Activated CD4-positive, alpha-beta memory T cell treated with anti-CD3 and anti-CD28 coated beads, Interleukin-2, amount 10 ng/mL, durations not matched to agents 7 days and 5 days (primary cell): ENCODE measurements at regions of chr16 and their contacts with region 1.

Region 1: GRCh38 chr16:78778101-78779004 is 678.9 kb downstream of the WWOX start:
- DNase-seq: peak; percentile 84
- H3K4me3 Mint-ChIP-seq: peak overlapping the region; percentile 58
- H3K27ac Mint-ChIP-seq: peak overlapping the region; percentile 98
- H3K4me1 Mint-ChIP-seq: peaks cover 95% of the 10 kb centered on the region
- H3K27me3 Mint-ChIP-seq: no peaks in the 10 kb centered on the region

Region 2: GRCh38 chr16:78742501-78743283 is 35.7 kb before region 1 on chr16:
- CTCF ChIA-PET with region 1: interaction called, 4 read pairs
- POLR2A ChIA-PET with region 1: interaction called, 15 read pairs
- DNase-seq: peak; percentile 90
- H3K4me3 Mint-ChIP-seq: peak overlapping the region; percentile 72
- H3K27ac Mint-ChIP-seq: peak overlapping the region; percentile 96
- H3K4me1 Mint-ChIP-seq: peaks cover 27% of the 10 kb centered on the region
- H3K27me3 Mint-ChIP-seq: no peaks in the 10 kb centered on the region

Region 3: GRCh38 chr16:78789561-78789960 is 11.2 kb after region 1 on chr16:
- CTCF ChIA-PET with region 1: interaction called, 10 read pairs
- POLR2A ChIA-PET with region 1: interaction called, 66 read pairs
- DNase-seq: no peak
- H3K4me3 Mint-ChIP-seq: no peak overlapping the region
- H3K27ac Mint-ChIP-seq: peak overlapping the region; percentile 64
- H3K4me1 Mint-ChIP-seq: peaks cover 76% of the 10 kb centered on the region
- H3K27me3 Mint-ChIP-seq: no peaks in the 10 kb centered on the region

Region 4: DNA sequence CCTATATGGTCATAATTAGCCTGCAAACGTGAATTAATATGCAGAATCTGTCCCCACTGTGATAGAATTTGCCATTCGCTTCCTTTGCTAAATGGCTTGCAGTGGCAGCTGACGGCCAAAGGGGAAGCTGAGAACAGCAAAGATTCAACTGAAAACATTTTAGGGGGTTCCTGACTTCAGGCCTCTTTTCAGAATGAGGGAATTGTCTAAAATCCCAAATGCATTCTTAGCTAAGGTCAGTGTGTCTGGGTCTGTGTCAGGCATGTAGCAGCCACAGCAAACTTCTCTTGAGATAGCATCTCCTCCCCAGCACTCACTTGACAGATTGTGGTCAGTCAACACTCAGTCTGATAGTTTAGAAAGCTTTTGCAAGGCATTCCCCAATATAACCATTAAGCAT is 22.2 kb after region 1 on chr16:
- CTCF ChIA-PET with region 1: interaction called, 3 read pairs
- POLR2A ChIA-PET with region 1: interaction called, 66 read pairs
- DNase-seq: no peak
- H3K4me3 Mint-ChIP-seq: no peak overlapping the region
- H3K27ac Mint-ChIP-seq: peak overlapping the region; percentile 50
- H3K4me1 Mint-ChIP-seq: peaks cover 39% of the 10 kb centered on the region
- H3K27me3 Mint-ChIP-seq: no peaks in the 10 kb centered on the region

Region 5: DNA sequence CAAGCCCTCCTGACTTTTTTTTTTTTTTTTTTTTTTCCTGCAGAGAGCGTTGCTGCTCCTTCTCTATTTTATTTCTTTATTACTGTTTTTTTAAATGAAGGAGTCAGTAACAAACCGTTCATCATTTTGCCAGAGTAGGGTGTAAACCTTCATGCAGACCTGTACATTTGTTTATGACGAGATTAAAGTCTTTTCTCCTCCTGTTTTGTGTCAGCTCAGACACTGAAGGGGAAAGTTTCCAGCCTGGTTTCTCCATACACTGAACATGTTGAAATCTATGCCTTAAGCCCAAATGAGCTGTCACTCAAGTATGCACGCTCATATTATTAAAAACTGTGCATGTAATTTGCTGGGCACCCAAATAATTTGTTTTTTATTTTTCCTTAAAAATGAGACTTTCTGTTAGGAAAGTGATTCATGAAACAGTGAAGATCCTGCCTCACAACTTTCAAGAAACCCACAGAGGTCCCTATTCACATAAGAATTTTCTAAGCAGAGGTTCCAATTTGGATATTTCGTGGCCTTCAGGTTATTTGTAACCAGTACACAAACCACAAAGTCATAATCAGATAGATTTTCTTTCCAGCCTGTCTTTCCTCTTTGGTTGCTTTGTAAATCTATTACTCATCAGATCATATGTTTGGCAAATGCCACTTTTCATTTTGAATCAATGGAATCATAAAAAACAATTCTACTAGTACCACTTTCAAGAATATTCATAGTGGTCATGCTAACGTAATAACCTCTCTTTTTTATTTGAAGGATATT is 121.9 kb after region 1 on chr16:
- CTCF ChIA-PET with region 1: interaction called, 9 read pairs
- POLR2A ChIA-PET with region 1: interaction called, 121 read pairs
- DNase-seq: no peak
- H3K4me3 Mint-ChIP-seq: peak overlapping the region; percentile 25
- H3K27ac Mint-ChIP-seq: peak overlapping the region; percentile 88
- H3K4me1 Mint-ChIP-seq: peaks cover 79% of the 10 kb centered on the region
- H3K27me3 Mint-ChIP-seq: no peaks in the 10 kb centered on the region

Region 6: DNA sequence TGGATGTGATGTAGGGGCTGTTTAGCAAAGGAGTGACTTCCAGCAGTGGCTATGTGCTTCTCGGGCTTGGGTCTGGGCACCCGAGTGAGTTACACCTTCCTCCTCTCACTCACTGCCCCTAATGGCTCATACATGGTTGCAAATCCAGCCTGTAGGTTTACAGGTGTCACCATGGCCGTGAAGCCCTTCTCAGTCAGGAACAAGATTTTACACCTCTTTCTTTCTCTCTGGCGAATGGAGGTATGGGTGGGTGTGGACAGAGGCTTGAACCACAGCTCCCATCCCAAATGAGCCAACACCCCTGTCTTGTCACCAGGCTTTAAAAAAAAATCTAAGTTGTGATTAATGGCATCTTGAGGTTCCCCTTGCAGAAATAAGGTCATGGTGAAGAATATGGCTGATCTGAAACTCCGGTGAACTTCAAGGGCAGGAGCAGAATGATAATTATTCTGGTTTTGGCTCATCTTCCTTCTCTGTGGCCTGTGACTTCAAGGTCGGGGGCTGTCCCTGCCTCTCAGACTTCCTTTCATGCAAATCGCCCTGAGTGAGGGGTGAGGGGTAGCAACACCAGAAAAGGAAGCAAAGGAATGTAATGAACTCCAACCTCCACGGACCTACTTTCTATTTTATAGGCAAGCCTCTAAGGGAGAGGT is 491.0 kb after region 1 on chr16:
- CTCF ChIA-PET with region 1: no interaction called
- POLR2A ChIA-PET with region 1: interaction called, 11 read pairs
- DNase-seq: peak; percentile 75
- H3K4me3 Mint-ChIP-seq: peak overlapping the region; percentile 52
- H3K27ac Mint-ChIP-seq: peak overlapping the region; percentile 89
- H3K4me1 Mint-ChIP-seq: peaks cover 90% of the 10 kb centered on the region
- H3K27me3 Mint-ChIP-seq: no peaks in the 10 kb centered on the region

Region 7: DNA sequence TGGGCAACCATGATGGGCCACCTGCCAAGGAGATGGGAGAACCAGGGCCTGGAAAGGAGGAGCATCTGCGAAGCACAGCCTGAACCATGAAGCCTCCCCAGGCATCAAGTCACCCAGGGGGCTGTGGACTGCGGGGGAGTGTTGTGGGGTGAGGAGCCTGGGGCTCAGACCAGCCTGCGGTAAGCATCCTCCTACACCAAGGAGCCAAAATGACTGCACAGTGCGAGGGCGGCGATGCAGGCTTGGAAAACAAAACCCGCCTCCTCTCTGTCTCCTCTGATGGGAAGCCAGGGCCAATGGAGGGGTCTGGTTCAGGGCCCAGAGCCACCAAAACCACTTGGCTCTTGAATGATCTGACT is 840.3 kb after region 1 on chr16:
- CTCF ChIA-PET with region 1: no interaction called
- POLR2A ChIA-PET with region 1: interaction called, 13 read pairs
- DNase-seq: peak; percentile 65
- H3K4me3 Mint-ChIP-seq: peak overlapping the region; percentile 53
- H3K27ac Mint-ChIP-seq: peak overlapping the region; percentile 98
- H3K4me1 Mint-ChIP-seq: peaks cover 76% of the 10 kb centered on the region
- H3K27me3 Mint-ChIP-seq: peaks cover 9% of the 10 kb centered on the region